ENCODE measurements at regions of chr4 and their contacts with region 1.

Region 1: GRCh38 chr4:38867478-38868058 is at the start of gene FAM114A1:
- DNase-seq: peak; percentile 81 to 88 (median 85)
- H3K4me3 ChIP-seq: peak within 1 kb of the TSS; percentile 60 to 93 (median 86)
- H3K27ac ChIP-seq: peak within 1 kb of the TSS; percentile 84 to 99 (median 96)
- H3K4me1 ChIP-seq: peaks cover 24 to 47% of the 10 kb centered on the region in 2 donors
- H3K27me3 ChIP-seq: no peaks in the 10 kb centered on the region
- CTCF ChIP-seq: no peak
- POLR2A ChIP-seq: peak; percentile 40 to 84
- total RNA-seq, gene FAM114A1: 115 to 335 (median 191) TPM

Region 2: GRCh38 chr4:38535717-38536116 is 331.9 kb before region 1 on chr4:
- intact Hi-C with region 1: no loop called
- DNase-seq: no peak
- H3K4me3 ChIP-seq: no peak overlapping the region
- H3K27ac ChIP-seq: no peak overlapping the region
- H3K4me1 ChIP-seq: no peaks in the 10 kb centered on the region
- H3K27me3 ChIP-seq: no peaks in the 10 kb centered on the region
- CTCF ChIP-seq: no peak
- POLR2A ChIP-seq: no peak

Region 3: GRCh38 chr4:38768968-38769394 is 98.6 kb before region 1 on chr4:
- intact Hi-C with region 1: loop called in 1 of 2 experiments (anchors 10 kb)
- DNase-seq: peak in 1 of 7 donors; percentile 23
- H3K4me3 ChIP-seq: no peak overlapping the region
- H3K27ac ChIP-seq: peak overlapping the region in 2 of 5 donors; percentile 5 to 60
- H3K4me1 ChIP-seq: peaks cover 0 to 11% of the 10 kb centered on the region in 2 donors
- H3K27me3 ChIP-seq: no peaks in the 10 kb centered on the region
- CTCF ChIP-seq: no peak
- POLR2A ChIP-seq: no peak

Region 4: GRCh38 chr4:39114436-39114835 is 246.9 kb after region 1 on chr4:
- intact Hi-C with region 1: no loop called
- DNase-seq: no peak
- H3K4me3 ChIP-seq: no peak overlapping the region
- H3K27ac ChIP-seq: no peak overlapping the region
- H3K4me1 ChIP-seq: peaks cover 0 to 6% of the 10 kb centered on the region in 2 donors
- H3K27me3 ChIP-seq: no peaks in the 10 kb centered on the region
- CTCF ChIP-seq: no peak
- POLR2A ChIP-seq: no peak